ENCODE measurements at regions of chr2 and their contacts with region 1.

Region 1: DNA sequence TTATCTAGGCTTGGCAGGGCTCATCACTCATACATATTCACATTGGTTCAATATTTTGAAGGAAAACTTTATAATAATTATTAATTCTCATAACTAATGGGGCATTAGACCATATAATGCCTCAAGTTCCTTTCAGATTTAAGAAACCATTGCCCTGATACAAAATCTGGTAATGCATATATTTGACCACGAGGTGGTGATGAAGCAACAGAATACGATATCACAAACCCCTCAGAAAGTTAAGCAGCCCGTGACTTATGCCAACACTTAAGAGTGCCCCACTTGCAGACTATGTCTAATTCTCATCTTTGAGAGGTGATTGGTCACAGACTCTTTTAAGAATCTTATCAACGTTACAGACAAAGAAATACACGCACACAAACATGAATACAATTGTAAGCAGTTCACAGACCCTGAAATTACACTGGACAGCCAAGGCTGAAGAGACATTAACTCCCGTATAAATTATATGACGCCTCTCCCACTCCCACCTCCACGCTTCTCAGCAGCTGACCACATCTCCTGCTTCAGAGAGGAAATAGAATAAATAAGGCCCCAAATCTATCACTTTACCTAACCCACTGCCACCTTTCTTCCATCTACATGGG is 20.7 kb upstream of the DNAH6 start:
- DNase-seq: peak; percentile 29
- ATAC-seq: peak; percentile 88
- H3K4me3 Mint-ChIP-seq: no peak overlapping the region
- H3K27ac Mint-ChIP-seq: no peak overlapping the region
- H3K4me1 Mint-ChIP-seq: peaks cover 20% of the 10 kb centered on the region
- H3K27me3 Mint-ChIP-seq: no peaks in the 10 kb centered on the region

Region 2: DNA sequence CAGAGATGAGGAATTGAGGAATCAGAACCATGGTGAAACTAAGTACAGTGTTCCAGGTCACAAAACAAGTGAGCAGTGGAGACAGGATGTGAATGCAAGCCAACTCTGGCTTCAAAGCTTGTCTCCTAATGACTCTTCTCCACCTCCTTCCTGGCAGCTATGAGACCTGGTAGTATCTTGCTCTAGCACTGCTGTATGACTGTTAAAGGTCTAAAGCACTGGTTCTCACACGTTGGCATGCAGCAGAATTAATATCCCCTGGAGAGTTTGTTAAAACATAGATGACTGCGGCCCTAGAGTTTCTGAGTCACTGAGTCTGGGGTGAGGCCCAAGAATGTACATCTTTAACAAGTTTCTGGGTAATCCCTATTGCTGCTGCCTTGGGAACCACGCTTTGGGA is 99.8 kb before region 1 on chr2:
- CTCF ChIA-PET with region 1: no interaction called
- POLR2A ChIA-PET with region 1: no interaction called
- intact Hi-C with region 1: no loop called
- DNase-seq: peak; percentile 7
- ATAC-seq: peak; percentile 91
- H3K4me3 Mint-ChIP-seq: no peak overlapping the region
- H3K27ac Mint-ChIP-seq: no peak overlapping the region
- H3K4me1 Mint-ChIP-seq: no peaks in the 10 kb centered on the region
- H3K27me3 Mint-ChIP-seq: peaks cover 2% of the 10 kb centered on the region

Region 3: GRCh38 chr2:84516234-84516986 is 20.8 kb after region 1 on chr2 and contains the start of gene DNAH6:
- CTCF ChIA-PET with region 1: no interaction called
- POLR2A ChIA-PET with region 1: no interaction called
- intact Hi-C with region 1: loop called in 1 of 2 experiments (anchors 2 kb)
- DNase-seq: peak; percentile 93
- ATAC-seq: peak; percentile 100
- H3K4me3 Mint-ChIP-seq: peak within 1 kb of the TSS; percentile 72
- H3K27ac Mint-ChIP-seq: peak within 1 kb of the TSS; percentile 30
- H3K4me1 Mint-ChIP-seq: peaks cover 11% of the 10 kb centered on the region
- H3K27me3 Mint-ChIP-seq: no peaks in the 10 kb centered on the region
- total RNA-seq, gene DNAH6: 1.1 to 1.3 TPM

Region 4: DNA sequence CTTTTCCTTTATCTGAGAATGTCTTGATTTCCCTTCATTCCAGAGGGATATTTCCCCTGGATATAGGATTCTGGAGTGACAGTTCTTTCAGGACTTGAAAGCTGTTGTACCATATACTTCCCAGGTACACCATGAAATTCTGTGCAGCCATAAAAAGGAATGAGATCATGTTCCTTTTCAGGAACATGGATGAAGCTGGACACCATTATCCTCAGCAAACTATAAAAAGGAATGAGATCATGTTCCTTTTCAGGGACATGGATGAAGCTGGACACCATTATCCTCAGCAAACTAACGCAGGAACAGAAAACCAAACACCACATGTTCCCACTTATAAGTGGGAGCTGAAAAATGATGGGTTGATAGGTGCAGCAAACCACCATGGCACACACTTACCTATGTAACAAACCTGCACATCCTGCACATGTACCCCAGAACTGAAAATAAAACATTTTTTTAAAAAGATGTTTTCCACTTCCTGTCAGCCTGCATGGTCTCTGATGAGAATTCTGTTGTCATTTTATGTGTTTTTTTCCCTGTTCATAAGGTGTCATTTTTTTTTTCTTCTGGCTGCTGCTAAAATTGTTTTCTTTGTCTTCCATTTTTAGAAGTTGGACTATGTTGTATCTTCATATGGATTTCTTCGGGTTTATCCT is 154.0 kb after region 1 on chr2:
- CTCF ChIA-PET with region 1: no interaction called
- POLR2A ChIA-PET with region 1: no interaction called
- intact Hi-C with region 1: loop called in 1 of 2 experiments (anchors 5 kb)
- DNase-seq: no peak
- ATAC-seq: peak; percentile 40
- H3K4me3 Mint-ChIP-seq: peak overlapping the region; percentile 22
- H3K27ac Mint-ChIP-seq: peak overlapping the region; percentile 56
- H3K4me1 Mint-ChIP-seq: peaks cover 74% of the 10 kb centered on the region
- H3K27me3 Mint-ChIP-seq: no peaks in the 10 kb centered on the region

Region 5: GRCh38 chr2:84881581-84882414 is 386.2 kb after region 1 on chr2:
- CTCF ChIA-PET with region 1: interaction called, 9 read pairs
- POLR2A ChIA-PET with region 1: no interaction called
- intact Hi-C with region 1: loop called (anchors 1 kb)
- DNase-seq: peak; percentile 95
- ATAC-seq: peak; percentile 75
- H3K4me3 Mint-ChIP-seq: peak overlapping the region; percentile 82
- H3K27ac Mint-ChIP-seq: peak overlapping the region; percentile 91
- H3K4me1 Mint-ChIP-seq: peaks cover 58% of the 10 kb centered on the region
- H3K27me3 Mint-ChIP-seq: no peaks in the 10 kb centered on the region

Region 6: DNA sequence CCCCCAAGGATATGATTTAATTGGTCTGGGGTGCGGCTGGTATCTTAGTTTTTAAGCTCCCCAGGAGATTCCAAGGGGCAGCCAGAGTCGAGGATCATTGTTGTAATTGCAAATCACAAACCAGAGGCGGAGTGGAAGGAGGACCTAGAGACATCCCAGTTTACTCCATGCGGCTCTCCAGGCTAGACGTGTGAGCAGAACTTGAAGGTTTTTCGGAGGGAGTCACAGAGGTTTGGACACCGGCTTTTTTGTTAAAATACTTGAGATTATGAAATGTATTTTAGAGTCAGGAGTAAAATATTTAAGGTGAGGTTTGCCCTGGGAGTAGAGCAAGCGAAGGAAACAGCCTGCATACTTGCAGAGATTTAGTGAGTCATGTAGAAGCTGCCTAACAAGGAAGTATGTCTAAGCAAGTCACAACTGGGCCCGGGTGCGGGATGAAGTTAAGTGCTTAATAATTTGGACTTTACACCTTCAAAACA is 792.6 kb after region 1 on chr2:
- CTCF ChIA-PET with region 1: no interaction called
- POLR2A ChIA-PET with region 1: no interaction called
- intact Hi-C with region 1: loop called (anchors 1 to 10 kb)
- DNase-seq: no peak
- ATAC-seq: no peak
- H3K4me3 Mint-ChIP-seq: no peak overlapping the region
- H3K27ac Mint-ChIP-seq: no peak overlapping the region
- H3K4me1 Mint-ChIP-seq: peaks cover 19% of the 10 kb centered on the region
- H3K27me3 Mint-ChIP-seq: no peaks in the 10 kb centered on the region

Measured in activated CD4-positive, alpha-beta T cell treated with anti-CD3 and anti-CD28 coated beads for 36 hours (primary cell).